CD4-positive, alpha-beta memory T cell (primary cell): ENCODE measurements at regions of chr18 and their contacts with region 1.

Region 1: DNA sequence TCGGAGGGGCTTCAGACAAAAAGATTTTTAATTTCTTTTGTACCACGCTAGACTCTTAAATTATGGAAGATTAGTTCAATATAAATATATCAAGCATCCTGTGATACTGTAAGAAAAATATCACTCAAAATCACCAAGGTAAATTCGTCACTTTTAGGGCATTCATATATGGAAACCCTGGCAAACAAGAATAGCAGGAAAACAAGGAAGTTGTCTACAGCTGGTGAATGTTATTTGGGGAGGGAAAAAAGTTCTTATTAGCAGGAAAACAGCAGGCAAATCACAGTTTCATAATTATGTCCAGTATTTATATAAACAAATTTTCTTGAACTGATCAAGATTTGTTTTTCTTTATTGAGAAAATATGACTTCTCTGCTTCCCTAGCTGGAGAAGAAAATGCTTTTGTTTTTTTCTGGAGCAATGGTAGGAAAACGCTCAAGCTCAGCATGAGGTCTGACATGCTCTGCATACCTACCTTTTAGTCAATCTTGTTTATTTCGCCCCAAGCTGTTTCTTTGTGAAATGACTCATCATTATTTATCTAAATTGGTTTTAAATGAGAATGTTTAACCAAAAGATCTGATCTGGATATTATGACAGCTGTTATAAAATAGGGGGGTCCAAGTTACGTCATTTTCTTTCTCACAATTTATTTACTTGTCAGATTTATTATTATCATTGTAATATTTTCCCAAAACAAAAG is 14.7 kb downstream of the LINC00305 start:
- DNase-seq: no peak
- H3K4me3 ChIP-seq: no peak overlapping the region
- H3K4me3 Mint-ChIP-seq: no peak overlapping the region
- H3K27ac ChIP-seq: no peak overlapping the region
- H3K27ac Mint-ChIP-seq: no peak overlapping the region
- H3K4me1 ChIP-seq: no peaks in the 10 kb centered on the region
- H3K4me1 Mint-ChIP-seq: no peaks in the 10 kb centered on the region
- H3K27me3 ChIP-seq: peaks cover 4% of the 10 kb centered on the region
- H3K27me3 Mint-ChIP-seq: peaks cover 0 to 4% of the 10 kb centered on the region in 2 donors

Region 2: DNA sequence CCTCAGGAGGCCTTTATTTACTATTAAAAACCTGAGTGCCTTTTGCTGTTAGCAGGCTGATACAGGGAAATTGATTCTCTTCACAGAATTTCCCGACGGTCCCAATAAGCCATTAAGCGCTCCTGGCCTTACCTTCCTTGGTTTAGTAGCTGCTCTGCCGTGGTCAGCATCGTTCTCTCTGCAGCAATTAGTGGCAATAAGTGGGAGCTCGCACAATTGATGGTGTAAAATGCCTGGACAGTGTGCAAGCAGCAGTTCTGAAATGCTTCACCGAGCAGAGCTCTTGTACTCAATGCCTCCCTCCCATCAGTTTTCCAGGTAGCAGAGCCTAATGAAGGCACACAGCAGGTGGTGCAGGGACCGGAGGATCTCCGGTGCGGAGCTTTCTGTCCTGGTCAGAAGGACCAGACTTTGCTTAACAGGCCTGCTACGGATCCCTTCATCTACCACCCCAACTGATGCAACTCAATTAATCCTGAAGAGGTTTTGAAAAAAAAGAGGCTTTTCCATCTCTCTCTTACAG is 15.8 kb after region 1 on chr18:
- CTCF ChIA-PET with region 1: no interaction called
- POLR2A ChIA-PET with region 1: no interaction called
- intact Hi-C with region 1: no loop called
- DNase-seq: no peak
- H3K4me3 ChIP-seq: no peak overlapping the region
- H3K4me3 Mint-ChIP-seq: no peak overlapping the region
- H3K27ac ChIP-seq: no peak overlapping the region
- H3K27ac Mint-ChIP-seq: no peak overlapping the region
- H3K4me1 ChIP-seq: no peaks in the 10 kb centered on the region
- H3K4me1 Mint-ChIP-seq: no peaks in the 10 kb centered on the region
- H3K27me3 ChIP-seq: no peaks in the 10 kb centered on the region
- H3K27me3 Mint-ChIP-seq: no peaks in the 10 kb centered on the region

Region 3: GRCh38 chr18:64191069-64191468 is 56.9 kb after region 1 on chr18:
- CTCF ChIA-PET with region 1: no interaction called
- POLR2A ChIA-PET with region 1: no interaction called
- intact Hi-C with region 1: loop called (anchors 10 kb)
- DNase-seq: no peak
- H3K4me3 ChIP-seq: no peak overlapping the region
- H3K4me3 Mint-ChIP-seq: no peak overlapping the region
- H3K27ac ChIP-seq: no peak overlapping the region
- H3K27ac Mint-ChIP-seq: no peak overlapping the region
- H3K4me1 ChIP-seq: no peaks in the 10 kb centered on the region
- H3K4me1 Mint-ChIP-seq: no peaks in the 10 kb centered on the region
- H3K27me3 ChIP-seq: no peaks in the 10 kb centered on the region
- H3K27me3 Mint-ChIP-seq: no peaks in the 10 kb centered on the region